ENCODE measurements at regions of chr7 and their contacts with region 1.

Region 1: DNA sequence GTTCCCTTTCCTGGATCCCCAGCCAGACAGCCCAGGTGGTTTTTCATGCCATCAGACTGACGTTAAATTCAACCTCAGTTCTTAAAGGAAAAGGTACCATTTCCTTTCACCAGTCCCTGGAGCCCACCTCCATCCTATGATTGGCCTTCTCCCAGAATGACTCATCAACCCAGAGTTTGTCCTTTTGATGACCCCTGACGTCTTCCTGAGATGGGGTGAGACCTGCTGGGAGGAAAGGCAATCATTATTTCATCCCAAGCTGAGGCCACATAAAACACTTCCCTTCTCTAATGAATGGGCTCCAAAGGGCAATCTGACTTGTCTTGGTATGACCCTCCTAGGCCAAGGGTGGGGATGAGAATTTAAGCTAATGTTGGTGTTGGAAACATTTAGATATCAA is 750.7 kb downstream of the SUGCT start:
- DNase-seq: no peak
- ATAC-seq: no peak
- H3K4me3 ChIP-seq: no peak overlapping the region
- H3K4me1 ChIP-seq: peaks cover 22% of the 10 kb centered on the region
- CTCF ChIP-seq: no peak

Region 2: GRCh38 chr7:40248681-40249080 is 636.8 kb before region 1 on chr7:
- intact Hi-C with region 1: no loop called
- DNase-seq: no peak
- ATAC-seq: no peak
- H3K4me3 ChIP-seq: no peak overlapping the region
- H3K4me1 ChIP-seq: no peaks in the 10 kb centered on the region
- CTCF ChIP-seq: no peak

Region 3: DNA sequence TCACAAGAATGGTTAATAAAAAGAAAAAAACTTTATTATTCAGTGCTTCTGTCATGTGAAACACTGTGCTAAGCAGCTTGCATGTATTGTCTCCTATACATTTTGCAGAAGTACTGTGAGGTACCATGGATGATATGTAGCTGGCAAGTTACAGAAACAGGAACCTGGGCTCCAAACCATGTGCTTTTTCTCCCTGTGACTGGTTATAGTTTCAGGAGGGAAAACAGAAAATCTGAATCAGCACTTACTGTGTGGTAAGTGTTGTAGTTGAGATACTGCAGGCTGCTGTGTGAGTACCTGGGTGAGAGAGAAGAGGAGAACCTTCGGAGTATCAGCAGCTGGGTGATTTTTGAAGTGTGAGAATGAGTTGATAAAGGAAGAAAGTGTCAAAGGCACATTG is 465.7 kb before region 1 on chr7:
- intact Hi-C with region 1: loop called in 1 of 2 experiments (anchors 10 kb)
- DNase-seq: no peak
- ATAC-seq: peak; percentile 34
- H3K4me3 ChIP-seq: no peak overlapping the region
- H3K4me1 ChIP-seq: peaks cover 13% of the 10 kb centered on the region
- CTCF ChIP-seq: no peak

Region 4: GRCh38 chr7:40700643-40701421 is 184.7 kb before region 1 on chr7:
- intact Hi-C with region 1: no loop called
- DNase-seq: no peak
- ATAC-seq: no peak
- H3K4me3 ChIP-seq: no peak overlapping the region
- H3K4me1 ChIP-seq: no peaks in the 10 kb centered on the region
- CTCF ChIP-seq: no peak

Region 5: GRCh38 chr7:40827217-40828085 is 58.1 kb before region 1 on chr7:
- intact Hi-C with region 1: loop called in 1 of 2 experiments (anchors 10 kb)
- DNase-seq: no peak
- ATAC-seq: peak; percentile 73
- H3K4me3 ChIP-seq: no peak overlapping the region
- H3K4me1 ChIP-seq: peaks cover 2% of the 10 kb centered on the region
- CTCF ChIP-seq: no peak